ENCODE measurements at regions of chr3 and their contacts with region 1.

Region 1: GRCh38 chr3:15997274-15997943 is 177.1 kb upstream of the GALNT15 start:
- DNase-seq: no peak
- ATAC-seq: no peak
- H3K4me3 ChIP-seq: no peak overlapping the region
- H3K27ac ChIP-seq: no peak overlapping the region
- H3K4me1 ChIP-seq: no peaks in the 10 kb centered on the region
- H3K27me3 ChIP-seq: no peaks in the 10 kb centered on the region
- CTCF ChIP-seq: no peak

Region 2: DNA sequence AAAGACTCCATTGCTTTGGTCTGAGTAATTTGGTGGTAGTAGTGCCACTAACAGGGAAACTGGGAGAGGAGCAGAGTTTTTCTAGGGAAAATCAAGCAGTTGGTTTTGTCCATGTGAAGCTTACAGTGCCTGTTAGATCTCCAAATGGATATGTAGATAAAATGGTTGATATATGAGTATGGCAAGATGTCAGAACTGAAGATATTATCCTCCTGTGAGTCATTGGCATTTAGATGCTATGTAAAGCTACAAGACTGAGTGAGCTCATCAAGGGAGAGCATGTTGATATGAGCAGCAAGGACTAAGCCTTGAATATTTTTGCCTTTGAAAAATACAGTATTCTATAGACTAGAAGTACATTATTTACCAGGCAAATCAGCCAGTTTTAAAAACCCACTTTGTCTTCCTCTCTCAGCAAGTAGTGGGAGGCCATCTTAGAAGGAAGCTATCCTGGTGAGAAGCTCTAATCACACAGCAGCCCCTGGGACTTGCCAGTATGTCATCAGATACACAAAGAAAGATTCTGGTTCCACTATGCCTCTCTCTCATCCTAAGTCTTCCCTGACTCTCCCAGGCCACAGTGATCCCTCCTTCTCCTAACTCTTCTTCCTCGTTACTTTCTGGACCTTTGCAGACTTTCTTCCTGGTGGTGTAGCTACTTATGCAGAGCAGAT is 122.3 kb before region 1 on chr3:
- intact Hi-C with region 1: loop called in 1 of 10 experiments (anchors 10 kb)
- DNase-seq: no peak
- ATAC-seq: no peak
- H3K4me3 ChIP-seq: no peak overlapping the region
- H3K27ac ChIP-seq: no peak overlapping the region
- H3K4me1 ChIP-seq: peaks cover 0 to 3% (median 0%) of the 10 kb centered on the region in 9 donors
- H3K27me3 ChIP-seq: no peaks in the 10 kb centered on the region
- CTCF ChIP-seq: no peak